Motor neuron (in vitro differentiated cells): ENCODE measurements at regions of chr3 and their contacts with region 1.

Region 1: GRCh38 chr3:78659386-78659987 is 1108.3 kb downstream of the ROBO1 start:
- ATAC-seq: no peak
- H3K4me3 ChIP-seq: no peak overlapping the region
- H3K27ac ChIP-seq: no peak overlapping the region
- H3K4me1 ChIP-seq: no peaks in the 10 kb centered on the region

Region 2: DNA sequence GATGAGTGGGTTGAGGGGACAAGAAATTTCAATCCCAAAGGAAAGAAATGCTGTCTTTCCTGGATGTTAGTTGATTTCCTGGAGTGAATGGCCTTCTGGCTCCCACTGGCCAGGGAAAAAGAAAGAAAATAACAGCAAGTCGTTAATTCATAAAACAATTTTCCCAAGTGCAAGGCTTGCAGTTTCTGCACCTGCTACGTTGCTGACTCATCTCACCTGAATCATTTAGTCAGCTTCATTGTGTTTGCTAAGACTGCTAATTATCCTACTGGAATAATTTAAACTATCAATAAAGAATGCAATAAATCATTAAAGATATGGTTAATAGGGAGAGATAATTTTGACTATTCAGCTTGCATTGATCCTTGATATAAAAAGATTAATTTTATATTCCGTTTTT is 1232.0 kb before region 1 on chr3:
- in situ Hi-C with region 1: no loop called
- ATAC-seq: peak in 1 of 8 experiments; percentile 40
- H3K4me3 ChIP-seq: no peak overlapping the region
- H3K27ac ChIP-seq: no peak overlapping the region
- H3K4me1 ChIP-seq: peaks cover 0 to 4% of the 10 kb centered on the region in 2 donors

Region 3: DNA sequence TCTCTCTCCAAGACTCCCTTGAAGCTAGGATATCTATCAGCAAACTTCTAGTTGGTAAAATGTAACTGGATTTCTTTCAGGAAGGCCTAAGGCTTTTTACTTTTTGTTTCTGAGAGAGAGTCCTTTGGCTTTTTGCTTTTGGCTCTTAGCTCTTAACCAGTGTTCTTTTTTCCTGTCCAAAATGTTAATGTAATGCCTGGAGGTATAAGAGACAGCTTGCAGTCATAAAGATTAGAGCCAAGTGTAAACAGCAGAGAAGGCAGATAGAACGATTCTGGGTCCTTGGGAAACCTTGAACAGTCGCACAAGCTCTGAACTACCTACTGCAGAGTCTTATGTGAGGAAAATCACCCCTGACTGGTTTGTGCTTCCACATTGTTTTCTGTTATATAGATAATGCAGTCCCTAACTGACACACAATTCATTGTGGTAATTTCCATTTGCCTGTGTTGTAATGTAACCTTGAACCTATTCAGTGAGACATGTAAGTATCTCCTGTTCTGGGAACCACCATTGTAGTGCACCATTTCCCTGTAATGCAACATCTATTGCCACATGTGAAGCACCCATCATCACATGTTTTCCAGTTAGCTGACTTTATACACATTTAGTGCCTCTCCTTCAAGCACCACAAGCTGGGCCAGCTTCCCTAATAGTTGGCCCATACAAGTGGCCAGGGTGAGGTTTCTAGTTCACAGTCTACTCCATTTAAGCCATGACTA is 203.6 kb before region 1 on chr3:
- in situ Hi-C with region 1: no loop called
- ATAC-seq: peak in 3 of 8 experiments; percentile 78 to 92 (median 81)
- H3K4me3 ChIP-seq: no peak overlapping the region
- H3K27ac ChIP-seq: no peak overlapping the region
- H3K4me1 ChIP-seq: no peaks in the 10 kb centered on the region

Region 4: DNA sequence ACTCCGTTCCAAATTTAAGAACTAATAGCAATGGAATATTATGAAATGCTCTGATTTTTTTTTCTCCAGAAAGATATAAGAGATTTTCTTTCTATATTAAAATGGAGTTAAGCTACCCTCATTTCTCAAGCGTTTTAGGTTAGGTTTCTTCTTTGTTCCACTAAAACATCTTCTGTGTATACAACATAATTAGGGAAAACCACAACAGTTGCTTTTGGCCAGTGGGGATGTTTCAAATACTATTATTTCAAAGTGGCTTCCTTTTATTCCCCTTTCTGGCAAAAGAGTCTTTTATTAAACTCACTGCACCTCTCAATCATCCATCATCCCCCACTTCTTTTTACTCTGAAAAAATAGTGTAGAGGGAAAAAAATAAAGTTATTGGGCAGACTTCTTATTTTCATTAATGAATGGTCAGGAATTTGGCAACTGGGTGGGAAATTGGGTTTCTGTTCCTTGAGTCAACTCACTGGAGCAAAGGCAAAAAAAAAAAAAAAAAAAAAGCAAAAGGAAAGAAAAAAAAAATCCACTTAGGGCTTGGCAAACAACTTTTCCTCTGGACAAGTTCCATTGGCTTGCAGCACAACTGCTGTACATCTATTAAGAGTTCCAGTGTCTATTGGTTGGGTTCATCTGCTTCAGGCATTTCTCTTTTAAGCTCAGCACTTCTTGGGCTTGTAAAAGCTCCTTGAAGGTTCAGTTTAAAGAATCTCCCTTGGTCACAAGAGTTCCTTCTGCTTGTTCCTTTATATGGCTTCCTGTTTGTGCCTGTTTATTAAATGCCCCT is 145.0 kb after region 1 on chr3:
- in situ Hi-C with region 1: loop called in 1 of 9 experiments (anchors 25 kb)
- ATAC-seq: peak in 1 of 8 experiments; percentile 27
- H3K4me3 ChIP-seq: no peak overlapping the region
- H3K27ac ChIP-seq: no peak overlapping the region
- H3K4me1 ChIP-seq: no peaks in the 10 kb centered on the region

Region 5: DNA sequence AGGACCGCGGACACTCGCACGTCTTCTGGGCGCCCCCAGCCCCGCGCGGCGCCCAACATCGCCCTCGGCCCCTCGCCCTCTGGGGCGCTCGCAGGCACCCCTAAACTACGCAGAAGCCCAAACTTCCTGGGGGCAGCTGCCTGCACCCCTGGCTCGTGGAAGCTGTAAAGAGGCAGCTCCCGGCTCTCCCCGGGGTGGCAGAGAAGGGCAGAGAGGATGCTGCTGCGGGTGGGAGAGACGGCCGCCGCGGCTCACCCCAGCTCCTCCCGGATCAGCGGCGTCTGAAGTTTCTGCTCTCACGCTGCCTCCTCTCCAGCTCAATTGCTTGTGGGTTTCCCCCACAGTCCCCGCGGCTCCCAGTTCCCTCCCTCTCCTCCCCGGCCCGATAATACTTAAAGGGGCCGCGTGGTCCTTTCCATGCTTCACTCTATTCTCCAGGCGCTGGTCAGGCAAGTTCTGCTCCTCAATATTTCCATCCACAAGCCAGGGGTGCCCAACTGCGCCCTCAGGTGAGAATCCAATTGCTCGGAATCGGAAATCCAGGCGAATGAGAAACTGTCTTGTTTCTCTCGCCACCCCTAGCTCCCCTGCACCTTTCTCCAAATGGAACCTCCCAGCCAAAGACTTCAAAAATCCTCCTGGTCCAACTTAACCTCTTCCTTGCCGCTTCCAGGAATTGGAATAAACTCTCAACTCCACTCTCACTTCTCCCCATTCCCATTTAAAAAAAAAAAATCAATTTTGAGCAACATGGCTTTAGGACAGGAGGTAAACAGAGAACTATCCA is 359.8 kb after region 1 on chr3:
- in situ Hi-C with region 1: loop called in 3 of 9 experiments (anchors 10 to 25 kb)
- ATAC-seq: peak; percentile 79 to 87 (median 82)
- H3K4me3 ChIP-seq: peak overlapping the region; percentile 69 to 93 (median 72)
- H3K27ac ChIP-seq: peak overlapping the region; percentile 94 to 96
- H3K4me1 ChIP-seq: peaks cover 5 to 25% of the 10 kb centered on the region in 2 donors

Region 6: DNA sequence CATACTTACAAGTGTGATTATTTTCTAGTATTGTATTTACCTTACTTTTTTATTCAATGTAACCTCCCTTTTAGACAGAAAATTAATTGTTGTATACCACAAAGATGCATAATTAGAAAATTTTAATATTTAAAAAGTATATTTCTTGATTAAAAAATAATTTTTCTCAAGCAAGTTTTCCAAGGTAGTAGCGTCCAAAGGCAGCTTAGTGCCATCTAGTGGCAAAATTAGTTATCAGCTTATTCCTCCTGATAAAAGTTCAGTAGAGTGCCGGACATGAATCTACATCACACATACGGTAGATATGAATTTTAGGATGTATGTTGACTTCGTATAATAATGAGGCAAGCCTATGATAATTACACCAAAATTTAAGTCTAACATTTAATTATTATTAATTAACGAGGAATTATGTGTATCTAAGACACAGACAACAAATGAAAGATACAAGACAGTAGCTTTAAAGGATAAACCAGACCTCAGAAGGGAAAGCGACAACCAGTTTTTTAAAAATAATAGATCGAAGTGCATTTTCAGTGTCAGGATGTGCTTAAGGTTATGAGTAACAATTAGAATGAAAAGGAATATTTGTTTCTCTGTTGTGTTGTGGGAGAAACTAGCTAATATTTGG is 702.4 kb after region 1 on chr3:
- in situ Hi-C with region 1: loop called in 4 of 9 experiments (anchors 25 kb)
- ATAC-seq: peak in 5 of 8 experiments; percentile 35 to 68 (median 63)
- H3K4me3 ChIP-seq: no peak overlapping the region
- H3K27ac ChIP-seq: no peak overlapping the region
- H3K4me1 ChIP-seq: no peaks in the 10 kb centered on the region

Region 7: GRCh38 chr3:79521238-79521848 is 861.9 kb after region 1 on chr3:
- in situ Hi-C with region 1: loop called in 1 of 9 experiments (anchors 25 kb)
- ATAC-seq: peak; percentile 33 to 79 (median 56)
- H3K4me3 ChIP-seq: no peak overlapping the region
- H3K27ac ChIP-seq: no peak overlapping the region
- H3K4me1 ChIP-seq: peaks cover 0 to 7% of the 10 kb centered on the region in 2 donors